Caco-2 (cell line): ENCODE measurements at regions of chr1 and their contacts with region 1.

Region 1: DNA sequence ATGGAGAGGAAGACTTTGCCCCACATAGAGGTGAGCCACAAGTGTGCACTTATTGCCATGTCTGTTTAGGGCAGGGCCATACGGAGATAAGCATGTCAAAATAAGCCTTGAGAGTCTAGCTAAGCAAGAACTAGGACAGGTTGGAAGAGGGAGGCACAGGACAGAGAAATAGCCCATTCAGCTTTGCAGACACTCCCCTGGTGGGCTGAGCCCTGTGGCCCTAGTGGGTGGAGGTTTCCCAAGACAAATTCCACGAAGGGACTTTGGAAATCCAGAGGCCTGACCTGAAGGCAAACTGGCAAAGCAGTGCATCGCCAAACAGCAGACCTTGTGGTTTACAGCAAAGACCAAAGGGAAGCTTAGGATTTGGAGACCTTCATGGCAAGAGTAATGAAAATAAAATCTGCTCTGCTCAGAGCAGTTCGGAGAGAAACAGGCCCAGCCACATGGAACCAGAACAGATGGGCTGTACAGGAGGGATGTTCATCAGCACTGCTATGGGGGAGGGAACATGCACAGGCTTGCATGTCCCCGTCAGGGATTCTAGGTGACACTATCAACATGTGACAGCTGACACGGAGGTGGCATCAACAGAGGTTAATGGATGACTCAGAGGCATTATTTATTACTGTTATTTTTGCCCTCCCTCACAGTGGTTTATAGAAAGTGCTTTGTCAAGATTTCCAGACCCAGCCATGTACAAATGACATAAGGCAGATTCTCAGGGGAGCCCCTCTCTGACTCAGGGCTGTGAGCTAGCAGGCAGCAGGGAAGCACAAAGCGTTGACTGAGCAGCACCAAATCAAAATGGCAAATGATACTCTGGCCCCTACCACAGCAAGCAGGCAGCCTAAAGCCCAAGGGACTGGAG is 90.1 kb upstream of the IRF2BP2 start:
- DNase-seq: no peak
- H3K4me3 ChIP-seq: no peak overlapping the region
- H3K4me3 Mint-ChIP-seq: no peak overlapping the region
- H3K27ac Mint-ChIP-seq: peak overlapping the region; percentile 5
- H3K4me1 ChIP-seq: peaks cover 12% of the 10 kb centered on the region
- H3K4me1 Mint-ChIP-seq: peaks cover 9% of the 10 kb centered on the region
- H3K27me3 ChIP-seq: no peaks in the 10 kb centered on the region
- H3K27me3 Mint-ChIP-seq: no peaks in the 10 kb centered on the region
- CTCF ChIP-seq: no peak

Region 2: GRCh38 chr1:234716908-234717375 is 16.9 kb after region 1 on chr1:
- CTCF ChIA-PET with region 1: no interaction called
- POLR2A ChIA-PET with region 1: interaction called, 3 read pairs
- intact Hi-C with region 1: loop called (anchors 2 kb)
- DNase-seq: peak in 1 of 2 experiments; percentile 49
- H3K4me3 ChIP-seq: no peak overlapping the region
- H3K4me3 Mint-ChIP-seq: peak overlapping the region; percentile 52
- H3K27ac Mint-ChIP-seq: peak overlapping the region; percentile 86
- H3K4me1 ChIP-seq: peaks cover 90% of the 10 kb centered on the region
- H3K4me1 Mint-ChIP-seq: peaks cover 80% of the 10 kb centered on the region
- H3K27me3 ChIP-seq: no peaks in the 10 kb centered on the region
- H3K27me3 Mint-ChIP-seq: no peaks in the 10 kb centered on the region
- CTCF ChIP-seq: no peak